ENCODE measurements at regions of chr1 and their contacts with region 1.

Region 1: DNA sequence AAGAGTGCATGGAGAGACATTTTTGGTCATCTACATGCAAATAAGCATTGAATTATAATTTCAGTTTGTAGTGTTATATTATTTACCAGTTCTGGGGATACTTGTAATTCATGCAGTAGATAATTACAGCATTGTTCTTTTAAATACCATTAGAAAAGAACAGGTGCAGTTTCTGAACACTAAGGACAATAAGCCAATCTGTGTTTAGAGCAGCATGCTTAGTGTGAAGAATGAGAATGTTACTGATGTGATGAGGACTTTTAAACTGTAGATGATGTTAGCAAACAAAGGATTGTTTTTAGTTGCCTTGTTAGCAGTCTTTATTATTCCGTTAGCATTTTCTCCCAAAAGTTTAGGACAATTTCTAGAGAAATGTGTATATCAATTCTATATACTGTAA is 348.3 kb downstream of the BRINP3 start:
- DNase-seq: no peak
- H3K4me3 ChIP-seq: no peak overlapping the region
- H3K27ac ChIP-seq: no peak overlapping the region
- H3K4me1 ChIP-seq: no peaks in the 10 kb centered on the region
- H3K27me3 ChIP-seq: no peaks in the 10 kb centered on the region
- CTCF ChIP-seq: no peak
- EP300 ChIP-seq: no peak
- POLR2A ChIP-seq: no peak

Region 2: DNA sequence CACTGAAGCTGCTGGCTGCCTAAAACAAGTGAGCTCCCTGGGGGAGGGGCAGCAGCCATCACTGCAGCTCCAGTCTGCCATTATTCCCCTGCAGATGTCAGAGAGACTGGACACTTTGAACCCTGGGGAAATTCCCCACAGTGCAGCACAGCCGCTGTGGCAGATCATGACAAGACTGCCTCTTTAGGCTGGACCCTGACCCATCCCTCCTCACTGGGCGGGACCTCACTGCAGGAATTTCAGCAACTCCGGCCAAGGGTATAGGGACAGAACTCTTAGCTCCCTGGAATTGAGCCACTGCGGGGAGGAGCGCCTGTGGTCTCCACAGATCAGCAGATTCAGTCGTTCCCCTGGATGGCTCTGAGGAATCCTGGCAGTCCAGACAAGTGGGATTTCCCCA is 616.3 kb before region 1 on chr1:
- intact Hi-C with region 1: no loop called
- DNase-seq: peak in 1 of 5 donors; percentile 11
- H3K4me3 ChIP-seq: no peak overlapping the region
- H3K27ac ChIP-seq: no peak overlapping the region
- H3K4me1 ChIP-seq: no peaks in the 10 kb centered on the region
- H3K27me3 ChIP-seq: no peaks in the 10 kb centered on the region
- CTCF ChIP-seq: no peak
- EP300 ChIP-seq: no peak
- POLR2A ChIP-seq: no peak

Region 3: DNA sequence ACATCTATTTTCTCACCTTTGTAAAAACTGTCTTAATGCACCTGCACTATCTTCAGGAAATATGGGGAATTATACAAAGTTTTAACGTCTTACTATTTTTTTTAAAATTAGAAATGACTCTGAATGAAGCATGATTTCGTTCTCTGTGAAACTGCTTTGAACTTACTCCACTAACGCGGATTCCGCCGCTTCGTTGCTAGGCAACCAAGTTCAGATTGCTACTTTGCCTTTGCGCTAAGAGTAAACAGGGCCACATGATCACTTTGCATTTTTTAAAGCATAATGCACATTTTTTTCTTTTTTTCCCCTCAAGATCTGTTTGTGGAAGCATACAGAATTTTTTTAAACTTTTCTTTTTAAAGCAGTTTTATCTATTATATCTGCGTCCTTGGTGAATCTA is 342.2 kb before region 1 on chr1:
- intact Hi-C with region 1: loop called in 1 of 4 experiments (anchors 5 kb)
- DNase-seq: no peak
- H3K4me3 ChIP-seq: no peak overlapping the region
- H3K27ac ChIP-seq: no peak overlapping the region
- H3K4me1 ChIP-seq: no peaks in the 10 kb centered on the region
- H3K27me3 ChIP-seq: no peaks in the 10 kb centered on the region
- CTCF ChIP-seq: no peak
- EP300 ChIP-seq: no peak
- POLR2A ChIP-seq: no peak

Measured in ovary (tissue), 10 donors.